SK-N-SH (cell line): ENCODE measurements at regions of chr17 and their contacts with region 1.

Region 1: DNA sequence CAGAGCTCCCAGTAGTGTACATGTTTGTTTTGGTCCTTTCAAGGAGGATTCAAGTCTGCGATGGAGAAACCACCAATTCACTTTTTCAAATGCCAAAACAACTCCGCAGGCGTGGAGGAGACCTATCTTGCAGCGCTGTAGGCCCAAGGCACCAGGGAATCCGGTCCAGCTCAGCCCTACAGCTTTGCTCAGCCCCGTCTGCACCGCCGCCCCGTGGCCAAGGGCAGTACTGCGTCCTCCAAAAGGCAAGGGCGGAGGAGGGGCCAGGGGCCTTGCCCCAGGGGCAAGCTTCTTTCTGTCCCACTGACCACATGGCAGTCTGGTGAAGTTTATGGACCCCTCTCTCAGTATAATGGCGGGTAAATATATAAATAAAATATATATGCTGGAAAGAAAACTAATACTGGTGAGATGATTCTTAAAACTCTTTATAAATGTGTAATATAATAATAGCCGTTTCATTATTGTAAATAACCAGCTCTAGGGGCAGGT is 709 bp upstream of the CD300LG start:
- DNase-seq: peak; percentile 93
- H3K4me3 ChIP-seq: no peak overlapping the region
- H3K27ac ChIP-seq: no peak overlapping the region
- H3K4me1 ChIP-seq: no peaks in the 10 kb centered on the region
- H3K27me3 ChIP-seq: no peaks in the 10 kb centered on the region
- CTCF ChIP-seq: peak; percentile 93
- EP300 ChIP-seq: no peak
- RAD21 ChIP-seq: peak; percentile 75

Region 2: DNA sequence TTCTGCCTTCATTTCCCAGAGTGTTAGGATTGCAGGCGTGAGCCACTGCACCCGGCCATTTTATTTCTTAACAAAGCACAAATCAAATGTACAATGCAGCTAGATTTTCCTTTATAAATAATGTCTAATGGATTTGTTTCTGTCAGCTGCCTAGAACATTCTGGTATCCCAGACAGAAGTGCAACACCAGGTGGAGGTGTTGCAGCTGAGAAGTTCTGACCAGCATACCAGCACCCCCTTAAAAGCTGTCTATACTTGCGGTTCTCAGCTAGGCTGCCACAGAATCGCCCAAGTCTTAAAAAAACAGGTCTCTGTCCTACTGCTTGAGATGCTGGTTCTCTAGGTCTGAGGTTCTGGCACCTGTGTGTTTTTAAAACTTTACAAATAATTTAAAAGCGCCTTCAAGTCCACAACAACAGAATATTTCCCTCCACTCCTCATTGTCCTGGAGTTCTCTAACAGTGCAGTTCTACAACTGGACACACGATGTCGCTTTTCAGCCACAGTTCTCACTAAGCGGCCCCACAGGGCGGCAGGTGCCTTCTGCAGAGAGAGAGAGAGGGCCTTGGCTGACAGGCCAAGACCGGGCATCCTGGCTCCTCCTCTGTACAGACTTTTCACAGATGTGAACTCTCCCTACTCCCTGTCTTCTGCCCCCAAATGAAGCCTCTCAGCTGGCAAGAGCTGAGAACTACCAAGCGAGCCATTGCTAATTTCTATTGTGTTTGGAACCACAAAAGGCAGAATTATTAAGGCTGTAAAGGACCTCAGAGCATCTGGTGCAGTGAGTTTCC is 152.0 kb before region 1 on chr17:
- CTCF ChIA-PET with region 1: interaction called, 12 read pairs
- POLR2A ChIA-PET with region 1: no interaction called
- DNase-seq: peak; percentile 86
- H3K4me3 ChIP-seq: peak overlapping the region in 1 of 2 experiments; percentile 39; a peak in 1 of 4 replicates
- H3K27ac ChIP-seq: no peak overlapping the region
- H3K4me1 ChIP-seq: peaks cover 5 to 7% of the 10 kb centered on the region in 2 experiments; a peak in 2 of 4 replicates
- H3K27me3 ChIP-seq: no peaks in the 10 kb centered on the region
- CTCF ChIP-seq: peak; percentile 96
- EP300 ChIP-seq: no peak
- RAD21 ChIP-seq: peak; percentile 99

Region 3: DNA sequence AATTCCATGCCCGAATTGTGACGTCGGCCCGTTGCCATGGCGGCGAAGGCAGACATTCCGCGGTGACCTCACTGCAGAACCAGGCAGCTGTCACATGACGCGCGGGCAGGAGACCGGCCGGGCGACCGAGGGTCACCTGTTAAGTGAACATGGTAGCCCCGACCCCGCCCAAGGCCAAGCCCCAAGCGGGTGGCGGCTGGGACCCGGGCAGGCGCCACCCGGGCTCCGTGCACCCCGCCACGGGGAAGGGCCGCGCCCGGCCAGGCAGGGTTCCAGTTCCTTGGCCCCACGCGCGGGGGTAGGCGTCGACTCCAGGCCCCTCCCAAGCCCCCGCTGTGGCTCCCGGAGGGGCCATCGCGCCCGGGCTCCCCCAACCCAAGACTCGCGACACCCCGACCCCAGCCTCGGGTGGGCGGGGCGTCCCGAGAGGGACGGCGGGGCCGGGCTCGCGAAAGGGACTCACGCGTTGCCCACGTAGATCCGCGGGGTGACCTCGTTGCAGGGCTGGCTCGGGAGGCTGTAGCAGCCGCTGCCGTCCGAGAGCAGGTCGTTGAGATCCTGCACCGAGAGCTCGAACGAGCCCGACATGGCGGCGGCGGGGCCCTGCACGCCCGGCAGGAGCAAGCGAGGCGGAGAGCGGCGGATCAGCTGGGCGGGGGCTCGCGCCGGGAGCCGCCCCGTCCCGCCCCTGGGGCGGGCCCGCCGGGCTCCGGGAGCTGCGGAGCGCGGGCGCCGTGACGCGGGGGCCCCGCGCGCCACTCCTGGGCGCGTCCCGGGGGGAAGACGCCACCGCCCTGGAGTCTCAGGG is 67.7 kb before region 1 on chr17 and contains the start of gene DUSP3:
- CTCF ChIA-PET with region 1: interaction called, 12 read pairs
- POLR2A ChIA-PET with region 1: interaction called, 4 read pairs
- DNase-seq: peak; percentile 97
- H3K4me3 ChIP-seq: peak within 1 kb of the TSS; percentile 77 to 84
- H3K27ac ChIP-seq: peak within 1 kb of the TSS; percentile 90 to 95
- H3K4me1 ChIP-seq: peaks cover 8% of the 10 kb centered on the region in 2 experiments; a peak in 1 of 4 replicates
- H3K27me3 ChIP-seq: no peaks in the 10 kb centered on the region
- CTCF ChIP-seq: no peak
- EP300 ChIP-seq: no peak
- RAD21 ChIP-seq: no peak
- polyA plus RNA-seq, gene DUSP3: 31.5 and 39.7 TPM in 2 replicates

Region 4: GRCh38 chr17:43816336-43817320 is 29.6 kb before region 1 on chr17:
- CTCF ChIA-PET with region 1: interaction called, 11 read pairs
- POLR2A ChIA-PET with region 1: no interaction called
- DNase-seq: no peak
- H3K4me3 ChIP-seq: no peak overlapping the region
- H3K27ac ChIP-seq: no peak overlapping the region
- H3K4me1 ChIP-seq: peaks cover 0 to 8% of the 10 kb centered on the region in 2 experiments; a peak in 1 of 4 replicates
- H3K27me3 ChIP-seq: no peaks in the 10 kb centered on the region
- CTCF ChIP-seq: no peak
- EP300 ChIP-seq: no peak
- RAD21 ChIP-seq: no peak

Region 5: GRCh38 chr17:43832976-43833829 is 13.1 kb before region 1 on chr17 and contains the start of gene MPP3:
- CTCF ChIA-PET with region 1: interaction called, 33 read pairs
- POLR2A ChIA-PET with region 1: no interaction called
- DNase-seq: peak; percentile 97
- H3K4me3 ChIP-seq: peak within 1 kb of the TSS; percentile 59 to 83
- H3K27ac ChIP-seq: peak within 1 kb of the TSS; percentile 38 to 62; a peak in 2 of 4 replicates
- H3K4me1 ChIP-seq: peaks cover 0 to 9% of the 10 kb centered on the region in 2 experiments; a peak in 1 of 4 replicates
- H3K27me3 ChIP-seq: no peaks in the 10 kb centered on the region
- CTCF ChIP-seq: no peak
- EP300 ChIP-seq: no peak
- RAD21 ChIP-seq: no peak
- polyA plus RNA-seq, gene MPP3: 12.5 and 14.1 TPM in 2 replicates

Region 6: DNA sequence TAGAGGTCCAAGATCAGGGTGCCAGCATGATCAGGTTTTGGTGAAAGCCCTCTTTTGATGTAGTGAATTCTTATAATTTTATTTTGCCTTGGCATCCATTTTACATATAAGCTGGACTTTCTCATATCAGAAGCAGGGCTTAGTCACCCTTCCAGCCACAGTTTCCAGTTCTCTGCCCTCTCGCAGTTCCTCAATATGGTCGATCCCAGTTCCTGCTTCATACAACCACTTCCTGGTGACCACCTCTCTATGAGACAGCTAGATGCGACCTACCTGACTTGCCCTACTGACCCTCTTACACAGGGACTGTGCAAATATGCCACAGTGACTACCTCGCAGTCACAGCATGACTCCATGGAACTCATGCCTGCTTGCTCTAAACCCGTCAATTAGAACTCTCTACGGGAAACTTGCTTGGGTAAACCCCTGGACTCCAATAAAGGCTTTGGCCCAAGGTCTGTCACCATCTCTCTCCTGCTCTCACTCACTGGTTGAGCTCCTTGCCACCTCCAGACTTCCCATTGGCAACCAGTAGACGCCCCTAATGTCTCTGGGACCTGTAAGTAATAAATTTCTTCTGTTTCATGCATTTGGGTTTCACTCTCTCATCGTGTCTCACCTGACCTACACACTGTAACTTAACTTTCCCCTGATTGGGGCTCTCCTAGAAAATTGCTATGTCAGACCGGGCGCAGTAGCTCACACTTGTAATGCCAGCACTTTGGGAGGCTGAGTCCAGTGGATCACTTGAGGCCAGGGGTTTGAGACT is 22.1 kb after region 1 on chr17:
- CTCF ChIA-PET with region 1: interaction called, 24 read pairs
- POLR2A ChIA-PET with region 1: no interaction called
- DNase-seq: no peak
- H3K4me3 ChIP-seq: no peak overlapping the region
- H3K27ac ChIP-seq: no peak overlapping the region
- H3K4me1 ChIP-seq: no peaks in the 10 kb centered on the region; a peak in 1 of 4 replicates
- H3K27me3 ChIP-seq: no peaks in the 10 kb centered on the region; the same call in 1 of the 2 replicates
- CTCF ChIP-seq: no peak
- EP300 ChIP-seq: no peak
- RAD21 ChIP-seq: no peak

Region 7: DNA sequence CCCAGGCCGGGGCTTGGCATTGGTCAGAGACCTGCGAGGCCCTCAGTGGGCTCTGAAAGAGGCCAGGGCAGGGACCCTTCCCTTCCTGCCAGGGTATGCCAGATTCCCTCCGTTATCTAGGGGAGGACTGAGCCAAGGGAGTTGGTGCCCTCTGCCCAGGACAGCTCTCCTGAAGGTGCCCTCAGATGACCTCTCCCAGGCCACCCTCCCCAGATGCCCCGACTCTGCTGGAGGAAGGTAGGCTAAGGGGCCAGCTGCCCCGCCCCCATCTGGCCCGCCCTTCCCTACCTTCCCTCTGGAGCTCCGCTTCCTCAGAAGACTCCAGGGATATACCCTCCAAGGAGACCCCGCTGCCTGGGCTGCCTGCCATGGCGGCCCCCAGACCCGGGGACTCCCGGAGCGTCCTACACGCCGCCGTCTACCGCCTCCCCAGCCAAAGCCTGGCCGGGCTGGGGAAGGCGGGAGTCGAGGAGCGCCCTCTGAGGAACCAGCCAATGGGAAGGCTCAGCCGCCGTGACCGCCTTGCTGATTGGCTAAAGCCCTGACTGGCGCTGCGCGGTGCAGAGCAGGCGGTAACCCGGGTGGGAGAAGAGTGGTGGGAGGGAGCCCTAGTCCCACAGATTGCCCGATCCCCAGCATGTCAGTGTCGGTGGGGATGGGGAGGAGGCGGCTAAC is 54.1 kb after region 1 on chr17:
- CTCF ChIA-PET with region 1: interaction called, 10 read pairs
- POLR2A ChIA-PET with region 1: no interaction called
- DNase-seq: peak; percentile 98
- H3K4me3 ChIP-seq: peak overlapping the region; percentile 56 to 66
- H3K27ac ChIP-seq: no peak overlapping the region; a peak in 1 of 4 replicates
- H3K4me1 ChIP-seq: peaks cover 7 to 20% of the 10 kb centered on the region in 2 experiments; a peak in 2 of 4 replicates
- H3K27me3 ChIP-seq: no peaks in the 10 kb centered on the region
- CTCF ChIP-seq: no peak
- EP300 ChIP-seq: no peak
- RAD21 ChIP-seq: no peak

Region 8: DNA sequence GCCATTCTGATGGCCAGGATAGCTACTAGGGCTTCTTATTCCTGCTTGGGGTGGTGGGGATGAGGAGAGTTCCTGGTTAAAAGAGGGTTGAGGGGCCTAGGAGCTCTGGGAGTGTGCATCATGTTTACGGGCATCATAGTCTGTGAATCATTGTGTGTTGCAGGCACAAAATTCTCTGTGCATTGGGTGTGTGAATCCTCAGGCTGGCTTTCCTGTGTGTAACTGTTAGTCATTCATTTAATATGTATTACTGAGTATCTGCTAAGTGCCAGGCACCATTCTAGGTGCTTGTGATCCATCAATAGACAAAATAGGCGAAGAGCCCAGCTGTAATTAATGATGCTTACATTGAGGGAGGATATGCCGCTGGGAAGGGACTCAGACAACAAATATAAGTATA is 90.2 kb after region 1 on chr17:
- CTCF ChIA-PET with region 1: no interaction called
- POLR2A ChIA-PET with region 1: no interaction called
- DNase-seq: no peak
- H3K4me3 ChIP-seq: no peak overlapping the region
- H3K27ac ChIP-seq: no peak overlapping the region
- H3K4me1 ChIP-seq: peaks cover 0 to 7% of the 10 kb centered on the region in 2 experiments; a peak in 1 of 4 replicates
- H3K27me3 ChIP-seq: no peaks in the 10 kb centered on the region
- CTCF ChIP-seq: no peak
- EP300 ChIP-seq: no peak
- RAD21 ChIP-seq: no peak

Region 9: GRCh38 chr17:43949781-43950180 is 103.5 kb after region 1 on chr17:
- CTCF ChIA-PET with region 1: no interaction called
- POLR2A ChIA-PET with region 1: no interaction called
- DNase-seq: no peak
- H3K4me3 ChIP-seq: no peak overlapping the region
- H3K27ac ChIP-seq: no peak overlapping the region
- H3K4me1 ChIP-seq: peaks cover 0 to 2% of the 10 kb centered on the region in 2 experiments; a peak in 1 of 4 replicates
- H3K27me3 ChIP-seq: no peaks in the 10 kb centered on the region
- CTCF ChIP-seq: peak; percentile 19; the same call in 1 of the 2 replicates
- EP300 ChIP-seq: no peak
- RAD21 ChIP-seq: no peak

Region 10: DNA sequence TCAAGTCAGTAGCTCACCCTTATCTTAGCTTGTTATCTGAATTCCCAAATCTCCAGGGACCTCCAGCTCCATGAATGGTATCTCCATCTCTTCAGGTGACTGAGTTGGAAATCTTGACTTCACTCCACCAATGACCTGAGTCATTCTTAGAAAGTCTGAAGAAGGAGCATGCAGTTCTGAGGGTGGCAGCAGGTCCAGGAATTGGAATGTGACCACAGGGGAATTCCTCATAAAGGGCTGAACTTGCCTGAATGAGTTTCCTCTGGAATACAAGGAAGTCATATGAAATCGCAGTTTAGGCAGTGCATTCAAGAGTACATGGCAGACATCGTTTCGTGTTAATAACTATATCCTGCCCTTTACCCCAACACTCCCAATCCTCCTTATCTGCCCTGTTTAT is 120.0 kb after region 1 on chr17:
- CTCF ChIA-PET with region 1: no interaction called
- POLR2A ChIA-PET with region 1: no interaction called
- DNase-seq: no peak
- H3K4me3 ChIP-seq: no peak overlapping the region
- H3K27ac ChIP-seq: no peak overlapping the region
- H3K4me1 ChIP-seq: no peaks in the 10 kb centered on the region
- H3K27me3 ChIP-seq: no peaks in the 10 kb centered on the region; the same call in 1 of the 2 replicates
- CTCF ChIP-seq: no peak
- EP300 ChIP-seq: no peak
- RAD21 ChIP-seq: no peak